Adrenal gland (tissue), 19 donors: ENCODE measurements at regions of chr7 and their contacts with region 1.

Region 1: GRCh38 chr7:139340037-139340807 is 915 bp upstream of the FMC1 start:
- DNase-seq: peak; percentile 98 to 100 (median 99)
- H3K4me3 ChIP-seq: peak overlapping the region; percentile 49 to 88 (median 68)
- H3K27ac ChIP-seq: peak overlapping the region; percentile 93 to 100 (median 100)
- H3K4me1 ChIP-seq: peaks cover 4 to 11% of the 10 kb centered on the region in 2 donors
- H3K27me3 ChIP-seq: no peaks in the 10 kb centered on the region
- CTCF ChIP-seq: peak; percentile 48 to 84 (median 73)
- POLR2A ChIP-seq: peak in 1 of 2 donors; percentile 66

Region 2: DNA sequence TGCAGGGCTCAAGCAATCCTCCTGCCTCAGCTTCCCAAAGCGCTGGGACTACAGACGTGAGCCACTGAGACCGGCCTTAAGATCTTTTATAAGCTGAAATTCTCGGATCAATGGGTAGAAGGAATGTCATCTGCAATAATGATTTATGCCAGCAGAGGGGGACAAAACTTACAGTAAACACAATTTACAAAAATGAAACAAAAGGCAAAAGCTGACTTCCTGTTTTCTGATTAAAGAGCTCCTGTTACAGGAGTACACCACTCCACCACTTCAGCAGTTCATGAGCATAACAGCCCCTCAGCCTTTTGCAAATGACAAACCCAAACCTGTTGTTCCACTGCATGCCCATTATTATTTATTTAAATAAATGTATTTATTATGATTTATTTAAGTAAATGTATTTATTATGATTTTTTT is 453.7 kb before region 1 on chr7:
- intact Hi-C with region 1: no loop called
- DNase-seq: peak in 5 of 7 donors; percentile 38 to 64 (median 53)
- H3K4me3 ChIP-seq: no peak overlapping the region
- H3K27ac ChIP-seq: no peak overlapping the region
- H3K4me1 ChIP-seq: peaks cover 4 to 33% of the 10 kb centered on the region in 2 donors
- H3K27me3 ChIP-seq: no peaks in the 10 kb centered on the region
- CTCF ChIP-seq: peak; percentile 51 to 89 (median 76)
- POLR2A ChIP-seq: peak in 1 of 2 donors; percentile 21

Region 3: DNA sequence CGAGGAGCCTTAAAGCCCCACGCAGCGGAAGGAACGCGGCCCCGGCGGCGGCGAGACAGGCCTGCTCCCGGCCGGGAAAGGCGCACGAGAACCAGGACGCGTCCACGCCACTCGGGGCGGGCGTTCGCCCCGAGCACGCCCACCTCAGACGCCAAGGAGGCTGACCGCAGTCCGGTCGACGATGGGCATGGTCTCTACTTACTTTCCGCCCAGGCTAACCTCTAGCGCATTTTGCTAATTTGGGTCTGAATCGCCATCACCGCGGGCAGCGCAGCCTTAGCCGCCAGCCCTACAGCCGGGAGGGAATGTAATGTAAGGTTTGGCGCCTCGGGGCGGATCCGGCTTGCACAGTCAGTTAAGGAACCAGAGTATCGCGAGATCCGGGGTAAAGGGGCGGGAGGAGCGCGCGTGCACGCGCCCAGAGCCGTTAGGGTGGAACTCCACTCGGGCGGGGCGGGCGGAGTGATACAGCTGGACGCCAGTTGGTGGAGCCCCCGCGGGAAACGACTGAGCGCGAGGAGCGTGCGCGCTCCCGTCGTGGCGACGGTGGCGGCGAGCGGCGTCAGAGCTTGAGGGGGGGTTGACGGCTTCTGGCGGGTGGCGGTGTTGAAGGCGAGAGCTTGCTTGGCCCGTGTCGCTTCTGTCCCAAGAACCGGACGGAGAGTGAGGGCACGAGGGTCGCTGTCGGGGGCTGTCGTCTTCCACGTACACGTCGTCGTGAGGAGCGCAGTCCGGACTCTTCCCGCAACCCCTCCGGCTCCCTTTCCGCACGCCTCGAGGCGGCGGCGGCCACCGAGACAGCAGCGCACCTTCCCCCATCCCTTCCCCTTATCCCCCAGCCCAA is 19.4 kb after region 1 on chr7 and contains the start of gene LUC7L2:
- intact Hi-C with region 1: loop called in 1 of 2 experiments (anchors 2 kb)
- DNase-seq: peak; percentile 99 to 100 (median 100)
- H3K4me3 ChIP-seq: peak within 1 kb of the TSS; percentile 77 to 99 (median 90)
- H3K27ac ChIP-seq: peak within 1 kb of the TSS; percentile 95 to 100 (median 99)
- H3K4me1 ChIP-seq: peaks cover 8 to 36% of the 10 kb centered on the region in 2 donors
- H3K27me3 ChIP-seq: no peaks in the 10 kb centered on the region
- CTCF ChIP-seq: peak in 3 of 6 experiments; percentile 1 to 20 (median 10)
- POLR2A ChIP-seq: peak; percentile 92 to 97
- total RNA-seq, gene LUC7L2: 31.5 to 100.0 (median 50.6) TPM

Region 4: DNA sequence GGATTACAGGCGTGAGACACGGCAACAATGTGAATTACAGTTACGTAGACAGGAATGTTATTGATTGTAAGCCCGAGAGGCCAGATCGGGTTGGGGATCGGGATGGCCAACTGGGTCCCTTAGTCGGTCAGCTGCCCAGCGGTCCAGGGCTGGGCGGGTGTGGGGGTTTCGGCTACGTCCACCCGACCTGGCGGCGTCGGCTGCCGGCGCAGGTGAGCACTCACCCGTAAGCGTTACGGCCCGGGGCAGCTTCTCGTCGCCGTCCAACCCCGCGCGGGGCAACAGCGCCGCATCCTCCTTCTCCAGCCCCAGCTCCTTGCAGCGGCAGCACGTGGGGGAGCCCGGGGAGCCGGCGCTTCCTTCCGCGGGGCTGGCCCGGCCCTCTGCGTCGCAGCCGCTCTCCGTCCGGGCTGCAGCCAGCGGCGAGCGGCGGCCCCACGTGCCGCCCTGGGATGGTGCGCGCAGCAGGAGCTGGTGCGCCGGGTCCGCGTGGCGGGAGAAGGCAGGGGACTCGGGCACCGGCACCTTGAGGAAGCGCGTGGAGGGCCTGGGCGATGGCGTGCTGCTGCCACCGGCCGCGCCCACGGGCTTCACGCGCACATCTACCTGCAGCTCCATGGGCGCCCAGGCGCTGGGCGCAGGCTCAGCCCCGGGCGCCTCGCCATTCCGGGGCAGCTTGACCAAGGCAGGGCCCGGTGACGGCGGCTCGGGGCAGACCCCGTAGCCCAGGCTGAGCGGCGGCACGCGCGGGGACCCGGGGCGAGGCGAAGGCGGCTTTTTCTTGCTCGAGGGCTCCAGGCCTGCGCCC is 142.6 kb after region 1 on chr7:
- intact Hi-C with region 1: no loop called
- DNase-seq: peak in 1 of 7 donors; percentile 4
- H3K4me3 ChIP-seq: peak overlapping the region in 1 of 4 donors; percentile 44
- H3K27ac ChIP-seq: no peak overlapping the region
- H3K4me1 ChIP-seq: peaks cover 4 to 15% of the 10 kb centered on the region in 2 donors
- H3K27me3 ChIP-seq: peaks cover 30% of the 10 kb centered on the region
- CTCF ChIP-seq: no peak
- POLR2A ChIP-seq: no peak